WTC11 (cell line): ENCODE measurements at regions of chr3 and their contacts with region 1.

Region 1: DNA sequence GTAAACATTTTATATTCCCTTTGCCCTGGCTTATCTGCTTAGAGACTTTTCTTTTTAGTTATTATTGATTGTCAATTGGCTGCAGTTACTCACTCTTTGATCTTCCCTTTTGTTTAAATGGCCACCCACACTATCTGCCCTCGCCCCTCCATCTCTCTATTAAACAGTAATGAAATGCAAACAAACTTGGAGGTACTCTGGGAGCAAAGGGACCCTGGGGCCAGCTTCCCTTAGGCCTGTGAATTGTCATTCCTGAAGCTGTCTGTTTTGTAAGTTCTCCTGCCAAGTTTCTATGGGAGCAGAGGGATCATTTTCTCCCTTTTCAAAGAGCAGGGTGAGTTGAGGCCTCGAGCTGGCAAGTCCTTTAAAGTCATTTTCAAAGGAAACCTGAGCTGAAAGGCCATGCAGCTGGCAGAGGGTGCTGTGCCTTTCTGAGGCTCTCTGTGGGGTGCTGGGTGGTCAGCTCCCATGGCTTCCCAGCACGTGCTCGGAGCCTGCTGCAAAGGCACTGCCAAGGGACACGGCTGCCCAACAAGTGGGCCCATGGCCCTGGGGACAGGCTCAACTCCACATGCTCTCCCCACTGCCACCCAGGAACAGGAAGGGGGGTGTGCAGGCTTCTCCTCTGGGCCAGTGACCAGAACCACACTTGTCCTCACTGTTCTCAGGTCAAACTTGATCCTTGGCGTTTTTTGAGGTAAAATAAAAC is 17.4 kb upstream of the RTP2 start:
- DNase-seq: no peak
- ATAC-seq: no peak
- H3K4me3 Mint-ChIP-seq: no peak overlapping the region
- H3K27ac Mint-ChIP-seq: peak overlapping the region; percentile 1; the same call in 1 of the 2 replicates
- H3K4me1 Mint-ChIP-seq: peaks cover 27% of the 10 kb centered on the region
- H3K27me3 Mint-ChIP-seq: peaks cover 9% of the 10 kb centered on the region; the same call in 1 of the 2 replicates
- CTCF ChIP-seq: no peak

Region 2: DNA sequence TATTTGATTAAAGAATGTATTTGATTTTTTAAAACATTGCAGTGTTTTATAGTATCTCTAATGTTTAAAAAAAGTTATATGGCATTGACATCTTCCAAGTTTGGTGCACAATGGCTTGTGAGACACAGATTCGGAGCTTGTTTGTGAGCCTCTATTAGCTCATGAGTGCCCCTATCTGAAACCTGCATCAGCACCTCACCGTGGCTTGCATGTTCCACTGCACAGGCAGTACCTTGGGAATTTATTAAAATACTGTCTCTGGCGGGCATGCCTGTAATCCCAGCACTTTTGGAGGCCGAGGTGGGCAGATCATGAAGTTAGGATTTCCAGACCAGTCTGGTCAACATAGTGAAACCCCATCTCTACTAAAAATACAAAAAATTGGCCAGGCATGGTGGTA is 10.6 kb before region 1 on chr3:
- CTCF ChIA-PET with region 1: interaction called, 11 read pairs
- POLR2A ChIA-PET with region 1: interaction called, 3 read pairs
- DNase-seq: peak; percentile 26
- ATAC-seq: peak; percentile 88
- H3K4me3 Mint-ChIP-seq: no peak overlapping the region
- H3K27ac Mint-ChIP-seq: no peak overlapping the region
- H3K4me1 Mint-ChIP-seq: peaks cover 2% of the 10 kb centered on the region; the same call in 1 of the 2 replicates
- H3K27me3 Mint-ChIP-seq: no peaks in the 10 kb centered on the region
- CTCF ChIP-seq: no peak

Region 3: GRCh38 chr3:188092648-188093047 is 372.9 kb after region 1 on chr3:
- CTCF ChIA-PET with region 1: no interaction called
- POLR2A ChIA-PET with region 1: no interaction called
- DNase-seq: no peak
- ATAC-seq: no peak
- H3K4me3 Mint-ChIP-seq: no peak overlapping the region
- H3K27ac Mint-ChIP-seq: no peak overlapping the region
- H3K4me1 Mint-ChIP-seq: no peaks in the 10 kb centered on the region
- H3K27me3 Mint-ChIP-seq: no peaks in the 10 kb centered on the region
- CTCF ChIP-seq: no peak